Sigmoid colon (tissue), 7 donors: ENCODE measurements at regions of chr13 and their contacts with region 1.

Region 1: GRCh38 chr13:75299913-75300862 is 181.8 kb downstream of the TBC1D4 start:
- DNase-seq: no peak
- H3K4me3 ChIP-seq: no peak overlapping the region
- H3K27ac ChIP-seq: no peak overlapping the region
- H3K4me1 ChIP-seq: no peaks in the 10 kb centered on the region
- H3K27me3 ChIP-seq: no peaks in the 10 kb centered on the region
- CTCF ChIP-seq: no peak
- EP300 ChIP-seq: no peak
- POLR2A ChIP-seq: no peak

Region 2: GRCh38 chr13:73365240-73365639 is 1934.9 kb before region 1 on chr13:
- intact Hi-C with region 1: loop called (anchors 10 kb)
- DNase-seq: no peak
- H3K4me3 ChIP-seq: no peak overlapping the region
- H3K27ac ChIP-seq: no peak overlapping the region
- H3K4me1 ChIP-seq: no peaks in the 10 kb centered on the region
- H3K27me3 ChIP-seq: no peaks in the 10 kb centered on the region
- CTCF ChIP-seq: no peak
- EP300 ChIP-seq: no peak
- POLR2A ChIP-seq: no peak

Region 3: DNA sequence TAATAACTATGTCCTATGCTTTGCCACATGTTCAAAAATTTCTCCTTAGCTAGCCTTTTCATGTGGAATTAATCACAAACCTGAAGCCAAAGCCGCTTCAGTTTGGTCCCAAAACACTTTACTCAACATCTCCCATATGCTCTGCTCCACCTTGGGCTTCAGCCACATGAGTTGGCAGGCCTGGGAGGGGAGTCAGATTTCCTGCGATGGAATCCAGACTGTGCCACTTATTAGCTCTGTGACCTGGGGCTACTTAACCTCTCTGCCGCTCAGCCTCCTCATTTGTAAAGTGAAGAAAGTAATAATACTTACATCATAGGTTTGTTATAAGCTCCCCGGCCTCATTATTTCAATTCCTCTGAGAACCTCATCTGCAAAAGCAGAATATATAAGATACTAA is 608.0 kb after region 1 on chr13:
- intact Hi-C with region 1: no loop called
- DNase-seq: no peak
- H3K4me3 ChIP-seq: no peak overlapping the region
- H3K27ac ChIP-seq: peak overlapping the region in 1 of 4 donors; percentile 60
- H3K4me1 ChIP-seq: peaks cover 0 to 11% (median 0%) of the 10 kb centered on the region in 4 donors
- H3K27me3 ChIP-seq: no peaks in the 10 kb centered on the region
- CTCF ChIP-seq: no peak
- EP300 ChIP-seq: no peak
- POLR2A ChIP-seq: no peak